Thyroid gland (tissue), 4 donors: ENCODE measurements at regions of chr9 and their contacts with region 1.

Region 1: GRCh38 chr9:121839726-121840500 is 188.5 kb downstream of the DAB2IP start:
- DNase-seq: no peak
- H3K4me3 ChIP-seq: no peak overlapping the region
- H3K27ac ChIP-seq: peak overlapping the region in 1 of 3 donors; percentile 60
- H3K4me1 ChIP-seq: peaks cover 7 to 27% of the 10 kb centered on the region in 2 donors
- H3K27me3 ChIP-seq: no peaks in the 10 kb centered on the region
- CTCF ChIP-seq: no peak
- POLR2A ChIP-seq: no peak

Region 2: GRCh38 chr9:121621113-121621449 is 218.8 kb before region 1 on chr9:
- intact Hi-C with region 1: no loop called
- DNase-seq: peak; percentile 24 to 39
- H3K4me3 ChIP-seq: no peak overlapping the region
- H3K27ac ChIP-seq: peak overlapping the region in 1 of 3 donors; percentile 38
- H3K4me1 ChIP-seq: no peaks in the 10 kb centered on the region
- H3K27me3 ChIP-seq: no peaks in the 10 kb centered on the region
- CTCF ChIP-seq: peak in 4 of 6 experiments; percentile 21 to 50 (median 38)
- POLR2A ChIP-seq: no peak

Region 3: GRCh38 chr9:121698627-121699570 is 141.0 kb before region 1 on chr9:
- intact Hi-C with region 1: no loop called
- DNase-seq: peak; percentile 66 to 71
- H3K4me3 ChIP-seq: peak overlapping the region; percentile 1 to 57 (median 18)
- H3K27ac ChIP-seq: peak overlapping the region in 2 of 3 donors; percentile 56 to 74
- H3K4me1 ChIP-seq: peaks cover 14 to 30% of the 10 kb centered on the region in 2 donors
- H3K27me3 ChIP-seq: no peaks in the 10 kb centered on the region
- CTCF ChIP-seq: no peak
- POLR2A ChIP-seq: no peak

Region 4: GRCh38 chr9:121929893-121930875 is 90.3 kb after region 1 on chr9:
- intact Hi-C with region 1: loop called (anchors 10 kb)
- DNase-seq: no peak
- H3K4me3 ChIP-seq: no peak overlapping the region
- H3K27ac ChIP-seq: no peak overlapping the region
- H3K4me1 ChIP-seq: peaks cover 14 to 31% of the 10 kb centered on the region in 2 donors
- H3K27me3 ChIP-seq: no peaks in the 10 kb centered on the region
- CTCF ChIP-seq: no peak
- POLR2A ChIP-seq: no peak